Posterior vena cava (tissue), 2 donors: ENCODE measurements at regions of chr9 and their contacts with region 1.

Region 1: GRCh38 chr9:35060548-35061207 is 11.7 kb downstream of the VCP start:
- DNase-seq: no peak

Region 2: GRCh38 chr9:35070823-35071813 is 10.4 kb after region 1 on chr9:
- intact Hi-C with region 1: loop called in 1 of 2 experiments (anchors 1 kb)
- DNase-seq: no peak